ENCODE measurements at regions of chr1 and their contacts with region 1.

Region 1: GRCh38 chr1:157551694-157552637 is at the start of gene FCRL5:
- DNase-seq: no peak
- ATAC-seq: no peak
- H3K4me3 ChIP-seq: no peak within 1 kb of the TSS
- H3K27ac ChIP-seq: no peak within 1 kb of the TSS
- H3K4me1 ChIP-seq: no peaks in the 10 kb centered on the region
- H3K27me3 ChIP-seq: no peaks in the 10 kb centered on the region
- CTCF ChIP-seq: no peak
- total RNA-seq, gene FCRL5: 0.07 to 0.46 TPM in 2 of 4 donors, not detected in the others

Region 2: DNA sequence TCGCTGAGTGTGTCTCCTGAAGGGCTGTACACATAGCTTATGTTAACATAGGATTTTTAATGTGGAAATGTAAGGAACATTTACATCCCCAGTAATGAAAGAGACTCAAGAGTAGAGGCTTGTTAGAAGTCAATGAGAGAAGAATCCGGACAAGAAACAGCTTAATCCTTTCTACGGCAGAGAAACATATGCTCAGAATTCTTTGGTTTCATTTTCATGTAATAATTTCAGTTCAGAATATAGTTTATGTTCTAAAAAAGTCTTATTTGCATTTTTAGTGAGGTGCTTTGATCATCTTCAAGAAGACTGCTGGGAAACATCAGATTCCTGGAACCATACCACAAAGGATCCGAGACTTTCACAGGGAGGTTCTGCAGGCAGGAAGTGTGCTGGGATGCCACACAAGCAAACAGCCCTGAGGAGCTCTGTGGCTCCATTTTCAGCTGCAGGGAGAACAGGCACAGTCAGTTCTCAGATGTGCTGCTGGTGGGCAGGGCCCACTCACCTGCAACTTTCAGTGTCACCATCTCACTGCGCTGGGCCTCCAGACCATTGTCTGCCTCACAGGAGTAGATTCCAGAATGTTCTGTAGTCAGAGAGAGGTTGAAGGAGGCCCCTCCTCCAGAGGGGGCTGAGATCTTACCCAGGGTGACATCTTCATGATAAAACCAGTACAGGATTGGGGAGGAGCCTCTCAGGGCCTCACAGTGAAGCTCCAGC is 28.0 kb before region 1 on chr1:
- intact Hi-C with region 1: loop called in 1 of 2 experiments (anchors 1 kb)
- DNase-seq: no peak
- ATAC-seq: no peak
- H3K4me3 ChIP-seq: no peak overlapping the region
- H3K27ac ChIP-seq: no peak overlapping the region
- H3K4me1 ChIP-seq: no peaks in the 10 kb centered on the region
- H3K27me3 ChIP-seq: peaks cover 0 to 3% (median 0%) of the 10 kb centered on the region in 3 donors
- CTCF ChIP-seq: no peak

Region 3: DNA sequence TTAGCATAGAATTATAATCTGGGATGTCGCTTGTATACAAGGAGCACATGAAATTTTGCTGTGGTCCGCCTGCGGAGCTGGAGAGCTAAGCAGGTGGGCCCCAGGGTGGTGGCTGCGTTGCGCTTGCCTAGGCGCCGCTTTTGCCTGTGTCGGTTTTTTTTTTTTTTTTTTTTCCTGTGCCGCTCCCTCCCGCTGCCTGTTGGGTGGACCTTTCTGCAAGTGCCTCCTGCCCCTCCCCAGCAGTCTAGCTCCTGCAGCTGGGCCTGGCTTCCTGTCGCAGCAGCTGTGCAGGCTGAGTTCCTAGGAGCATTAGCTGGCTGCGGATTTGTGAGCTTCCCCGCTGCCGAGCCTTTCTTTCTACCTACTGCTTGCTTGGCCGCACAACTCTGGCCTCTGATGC is 1400.0 kb after region 1 on chr1:
- intact Hi-C with region 1: no loop called
- DNase-seq: no peak
- ATAC-seq: no peak
- H3K4me3 ChIP-seq: no peak overlapping the region
- H3K27ac ChIP-seq: no peak overlapping the region
- H3K4me1 ChIP-seq: no peaks in the 10 kb centered on the region
- H3K27me3 ChIP-seq: no peaks in the 10 kb centered on the region
- CTCF ChIP-seq: no peak